IMR-90 (cell line): ENCODE measurements at regions of chr5 and their contacts with region 1.

Region 1: GRCh38 chr5:180209137-180209581 is at the start of gene RASGEF1C:
- DNase-seq: peak; percentile 47
- ATAC-seq: peak; percentile 98
- H3K4me3 ChIP-seq: peak within 1 kb of the TSS; percentile 41
- H3K27ac ChIP-seq: no peak within 1 kb of the TSS
- H3K4me1 ChIP-seq: peaks cover 1% of the 10 kb centered on the region; the same call in 1 of the 2 replicates
- H3K27me3 ChIP-seq: peaks cover 16% of the 10 kb centered on the region; the same call in 1 of the 2 replicates
- CTCF ChIP-seq: peak; percentile 65
- POLR2A ChIP-seq: no peak
- RAD21 ChIP-seq: peak; percentile 45; the same call in 1 of the 2 replicates
- total RNA-seq, gene RASGEF1C: not detected in 2 replicates

Region 2: DNA sequence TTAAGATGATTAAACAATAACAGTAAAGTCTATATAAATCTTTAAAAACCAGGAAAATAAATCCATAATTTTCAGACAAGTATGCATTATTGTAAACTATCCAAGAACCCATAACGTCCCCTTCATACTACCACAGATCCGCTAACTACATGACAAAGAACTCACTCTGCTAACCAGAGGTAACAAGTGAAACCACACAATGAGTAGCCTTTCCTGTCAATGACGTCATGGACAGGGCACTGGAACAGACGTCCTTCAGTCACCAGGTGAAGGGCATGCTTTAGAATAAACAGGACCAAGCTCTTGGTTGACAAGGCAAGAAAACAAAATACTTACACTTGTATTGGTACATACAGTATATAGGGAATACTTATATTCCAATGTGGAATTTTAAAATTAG is 182.8 kb before region 1 on chr5:
- CTCF ChIA-PET with region 1: no interaction called
- POLR2A ChIA-PET with region 1: no interaction called
- dilution Hi-C with region 1: no loop called
- in situ Hi-C with region 1: no loop called
- intact Hi-C with region 1: no loop called
- DNase-seq: peak; percentile 67
- ATAC-seq: no peak
- H3K4me3 ChIP-seq: no peak overlapping the region
- H3K27ac ChIP-seq: no peak overlapping the region
- H3K4me1 ChIP-seq: 0 out of 2 replicates have a peak, but pooled peaks cover 2% of the 10 kb centered on the region
- H3K27me3 ChIP-seq: no peaks in the 10 kb centered on the region
- CTCF ChIP-seq: no peak
- POLR2A ChIP-seq: no peak
- RAD21 ChIP-seq: no peak

Region 3: DNA sequence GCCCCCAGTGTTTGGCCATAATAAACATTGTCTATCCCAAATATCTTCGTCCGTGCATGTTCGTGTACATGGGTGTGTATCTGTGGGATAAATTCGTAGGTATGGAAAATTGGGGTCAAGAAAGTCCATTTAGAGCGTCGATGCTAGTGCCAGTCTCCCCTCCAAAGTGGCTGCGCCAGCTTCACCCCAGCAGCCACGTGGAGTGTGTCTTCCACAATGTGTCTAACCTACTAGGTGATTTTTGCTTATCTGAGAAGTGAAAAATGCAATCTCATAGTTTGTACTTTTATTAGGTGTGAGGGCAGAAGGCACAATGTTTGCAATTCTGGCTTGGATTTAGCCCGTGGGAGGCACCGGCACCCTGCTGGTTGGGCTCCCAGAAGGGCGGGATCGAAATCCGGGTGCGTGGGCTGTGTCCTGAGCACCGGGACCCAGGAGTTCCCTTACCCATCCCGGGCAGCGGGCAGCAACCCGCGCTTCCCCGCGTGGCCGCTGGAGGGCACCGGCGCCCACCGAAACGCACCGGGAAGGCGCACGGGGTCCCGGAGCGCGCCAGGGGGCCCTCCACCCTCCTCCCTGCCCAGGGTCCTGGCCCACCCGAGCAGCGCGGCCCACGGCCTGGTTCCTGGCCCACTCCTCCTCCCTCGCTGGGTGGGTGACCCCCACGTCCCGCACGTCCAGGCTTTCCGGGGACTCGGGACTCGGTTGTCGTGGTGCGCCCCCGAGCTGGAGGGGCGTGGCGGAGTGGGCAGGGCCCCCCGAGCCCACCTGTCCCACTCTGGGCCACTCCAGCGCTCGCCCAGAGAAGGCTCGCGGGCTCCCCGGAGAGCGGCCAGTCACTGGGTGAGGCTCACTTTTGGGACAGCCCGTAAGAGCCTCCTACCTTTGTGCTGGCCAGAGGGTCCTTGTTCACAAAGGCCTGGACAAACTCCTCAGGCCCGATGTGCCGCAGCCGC is 82.2 kb before region 1 on chr5:
- CTCF ChIA-PET with region 1: interaction called, 5 read pairs
- POLR2A ChIA-PET with region 1: no interaction called
- dilution Hi-C with region 1: no loop called
- in situ Hi-C with region 1: no loop called
- intact Hi-C with region 1: loop called (anchors 1 kb)
- DNase-seq: no peak
- ATAC-seq: peak; percentile 94
- H3K4me3 ChIP-seq: no peak overlapping the region
- H3K27ac ChIP-seq: no peak overlapping the region
- H3K4me1 ChIP-seq: no peaks in the 10 kb centered on the region; the same call in 1 of the 2 replicates
- H3K27me3 ChIP-seq: peaks cover 24% of the 10 kb centered on the region
- CTCF ChIP-seq: peak; percentile 73
- POLR2A ChIP-seq: no peak
- RAD21 ChIP-seq: peak; percentile 77

Region 4: GRCh38 chr5:180161420-180162303 is 47.5 kb before region 1 on chr5:
- CTCF ChIA-PET with region 1: interaction called, 4 read pairs
- POLR2A ChIA-PET with region 1: no interaction called
- dilution Hi-C with region 1: no loop called
- in situ Hi-C with region 1: no loop called
- intact Hi-C with region 1: loop called (anchors 1 kb)
- DNase-seq: no peak
- ATAC-seq: peak; percentile 53
- H3K4me3 ChIP-seq: no peak overlapping the region
- H3K27ac ChIP-seq: no peak overlapping the region
- H3K4me1 ChIP-seq: peaks cover 2% of the 10 kb centered on the region; the same call in 1 of the 2 replicates
- H3K27me3 ChIP-seq: peaks cover 5% of the 10 kb centered on the region
- CTCF ChIP-seq: no peak
- POLR2A ChIP-seq: no peak
- RAD21 ChIP-seq: no peak

Region 5: GRCh38 chr5:180605554-180606214 is 396.5 kb after region 1 on chr5:
- CTCF ChIA-PET with region 1: no interaction called
- POLR2A ChIA-PET with region 1: no interaction called
- dilution Hi-C with region 1: no loop called
- in situ Hi-C with region 1: no loop called
- intact Hi-C with region 1: loop called (anchors 10 kb)
- DNase-seq: peak; percentile 51
- ATAC-seq: peak; percentile 73
- H3K4me3 ChIP-seq: no peak overlapping the region
- H3K27ac ChIP-seq: no peak overlapping the region
- H3K4me1 ChIP-seq: no peaks in the 10 kb centered on the region
- H3K27me3 ChIP-seq: peaks cover 10% of the 10 kb centered on the region; the same call in 1 of the 2 replicates
- CTCF ChIP-seq: peak; percentile 56
- POLR2A ChIP-seq: no peak
- RAD21 ChIP-seq: peak; percentile 52